GM12878 (cell line): ENCODE measurements at regions of chr12 and their contacts with region 1.

Region 1: DNA sequence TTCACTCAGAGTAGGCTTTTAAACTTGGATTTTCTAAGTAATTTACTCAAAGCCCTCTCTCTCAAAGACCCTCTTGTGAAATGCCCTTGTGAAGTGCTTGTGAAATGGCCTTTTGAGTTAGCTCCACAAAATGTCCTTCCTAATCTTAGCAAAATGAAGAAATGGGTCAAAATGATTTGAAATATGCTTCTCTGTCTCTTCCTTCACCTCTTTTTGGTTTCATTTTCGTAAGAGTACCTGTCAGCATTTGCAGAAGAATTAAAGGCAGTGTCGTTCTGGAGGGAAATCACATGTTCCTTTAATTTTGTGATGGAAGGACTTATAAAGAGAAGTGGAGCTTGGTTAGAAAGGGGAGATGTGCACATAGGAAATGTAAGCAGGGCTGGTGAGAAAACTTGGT is 93.7 kb downstream of the HMGA2 start:
- DNase-seq: no peak
- ATAC-seq: peak; percentile 63
- H3K4me3 ChIP-seq: peak overlapping the region; percentile 15; the same call in 1 of the 2 replicates
- H3K27ac ChIP-seq: no peak overlapping the region
- H3K4me1 ChIP-seq: peaks cover 4% of the 10 kb centered on the region; the same call in 1 of the 2 replicates
- H3K27me3 ChIP-seq: no peaks in the 10 kb centered on the region
- CTCF ChIP-seq: no peak
- EP300 ChIP-seq: no peak
- POLR2A ChIP-seq: no peak
- RAD21 ChIP-seq: no peak

Region 2: DNA sequence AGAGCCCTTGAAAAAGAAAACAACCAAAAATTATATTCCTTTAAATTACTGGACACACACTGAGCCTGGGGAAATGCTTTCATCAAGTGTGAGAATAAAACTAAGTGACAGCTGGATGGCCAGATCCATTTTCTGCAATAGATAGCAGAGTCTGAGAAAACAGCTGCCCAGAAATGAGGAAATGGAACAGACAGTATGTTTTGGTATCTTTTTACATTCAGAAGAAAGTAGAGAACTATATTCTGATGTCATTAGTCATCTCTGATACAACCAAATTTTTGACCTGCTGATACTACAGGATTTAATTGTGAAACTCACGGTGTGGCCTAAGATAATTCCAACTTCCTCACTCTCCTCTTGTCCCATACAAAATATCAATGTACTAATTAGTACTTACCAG is 15.5 kb before region 1 on chr12:
- CTCF ChIA-PET with region 1: interaction called, 9 read pairs
- POLR2A ChIA-PET with region 1: interaction called, 6 read pairs
- RAD21 ChIA-PET with region 1: interaction called, 6 read pairs
- SMC1A ChIA-PET with region 1: interaction called, 15 read pairs
- in situ Hi-C with region 1: no loop called
- intact Hi-C with region 1: no loop called
- DNase-seq: no peak
- ATAC-seq: peak; percentile 87
- H3K4me3 ChIP-seq: no peak overlapping the region
- H3K27ac ChIP-seq: peak overlapping the region; percentile 24; the same call in 1 of the 2 replicates
- H3K4me1 ChIP-seq: peaks cover 2% of the 10 kb centered on the region; the same call in 1 of the 2 replicates
- H3K27me3 ChIP-seq: no peaks in the 10 kb centered on the region
- CTCF ChIP-seq: no peak
- EP300 ChIP-seq: 0 out of 4 replicates have a peak, but pooled peaks of 1 of the 2 experiments have one; percentile 36
- POLR2A ChIP-seq: no peak
- RAD21 ChIP-seq: no peak